Dorsolateral prefrontal cortex (tissue), 120 donors: ENCODE measurements at regions of chr4 and their contacts with region 1.

Region 1: GRCh38 chr4:162497564-162498167 is 333.9 kb upstream of the FSTL5 start:
- DNase-seq: no peak
- H3K4me3 ChIP-seq: peak overlapping the region in 38 of 59 donors; percentile 1 to 52 (median 34)
- H3K27ac ChIP-seq: no peak overlapping the region
- H3K27me3 ChIP-seq: no peaks in the 10 kb centered on the region
- CTCF ChIP-seq: peak; percentile 75 to 94 (median 86)

Region 2: DNA sequence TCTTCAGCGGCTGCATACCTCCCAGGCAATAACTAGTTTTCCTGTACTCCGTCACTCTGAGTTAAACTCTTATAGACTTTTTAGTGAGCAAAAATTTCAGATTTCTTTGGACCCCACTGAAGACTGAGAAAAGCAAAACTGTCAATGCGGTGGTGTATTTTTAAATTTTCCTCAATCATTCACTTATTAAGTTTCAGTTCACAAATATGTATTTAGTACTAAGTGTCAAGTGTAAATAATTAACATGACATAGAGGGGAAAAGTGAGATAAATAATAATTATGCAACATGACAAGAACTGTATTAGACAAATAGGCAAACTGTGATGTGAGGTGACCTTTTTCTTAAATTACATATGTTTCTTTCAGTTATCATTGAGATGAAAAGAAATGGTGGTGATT is 544.6 kb after region 1 on chr4:
- intact Hi-C with region 1: loop called in 1 of 2 experiments (anchors 5 kb)
- DNase-seq: no peak
- H3K4me3 ChIP-seq: no peak overlapping the region
- H3K27ac ChIP-seq: no peak overlapping the region
- H3K27me3 ChIP-seq: no peaks in the 10 kb centered on the region
- CTCF ChIP-seq: no peak

Region 3: DNA sequence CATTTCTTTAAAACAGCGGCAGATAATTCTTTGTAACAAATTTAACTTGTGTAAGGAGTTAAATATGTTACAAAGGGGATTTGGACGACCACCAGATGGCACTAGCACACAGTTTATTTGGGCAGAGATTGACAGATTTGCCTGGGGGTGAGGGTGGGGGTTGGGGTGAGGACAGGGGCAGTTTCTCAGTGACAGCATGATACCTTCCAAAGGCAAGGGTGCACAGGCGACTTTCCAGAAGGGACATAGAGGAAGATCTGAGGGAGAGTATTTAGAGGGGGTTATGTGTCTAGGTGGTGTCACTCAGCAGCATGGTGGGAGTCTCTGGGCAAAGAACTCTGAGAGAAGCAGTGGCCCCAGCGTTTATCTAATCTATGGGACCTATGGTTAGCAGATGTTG is 987.2 kb after region 1 on chr4:
- intact Hi-C with region 1: loop called in 1 of 2 experiments (anchors 10 kb)
- DNase-seq: peak in 4 of 10 donors; percentile 10 to 52 (median 38)
- H3K4me3 ChIP-seq: no peak overlapping the region
- H3K27ac ChIP-seq: no peak overlapping the region
- H3K27me3 ChIP-seq: no peaks in the 10 kb centered on the region
- CTCF ChIP-seq: peak; percentile 24 to 83 (median 64)

Region 4: GRCh38 chr4:163544407-163545038 is 1046.9 kb after region 1 on chr4:
- intact Hi-C with region 1: loop called (anchors 2 to 5 kb)
- DNase-seq: peak in 9 of 10 donors; percentile 45 to 70 (median 57)
- H3K4me3 ChIP-seq: peak overlapping the region in 55 of 59 donors; percentile 15 to 63 (median 41)
- H3K27ac ChIP-seq: peak overlapping the region in 6 of 59 donors; percentile 1 to 52 (median 16)
- H3K27me3 ChIP-seq: no peaks in the 10 kb centered on the region
- CTCF ChIP-seq: peak; percentile 77 to 97 (median 91)